Activated CD4-positive, alpha-beta T cell treated with anti-CD3 and anti-CD28 coated beads for 36 hours (primary cell): ENCODE measurements at regions of chr18 and their contacts with region 1.

Region 1: DNA sequence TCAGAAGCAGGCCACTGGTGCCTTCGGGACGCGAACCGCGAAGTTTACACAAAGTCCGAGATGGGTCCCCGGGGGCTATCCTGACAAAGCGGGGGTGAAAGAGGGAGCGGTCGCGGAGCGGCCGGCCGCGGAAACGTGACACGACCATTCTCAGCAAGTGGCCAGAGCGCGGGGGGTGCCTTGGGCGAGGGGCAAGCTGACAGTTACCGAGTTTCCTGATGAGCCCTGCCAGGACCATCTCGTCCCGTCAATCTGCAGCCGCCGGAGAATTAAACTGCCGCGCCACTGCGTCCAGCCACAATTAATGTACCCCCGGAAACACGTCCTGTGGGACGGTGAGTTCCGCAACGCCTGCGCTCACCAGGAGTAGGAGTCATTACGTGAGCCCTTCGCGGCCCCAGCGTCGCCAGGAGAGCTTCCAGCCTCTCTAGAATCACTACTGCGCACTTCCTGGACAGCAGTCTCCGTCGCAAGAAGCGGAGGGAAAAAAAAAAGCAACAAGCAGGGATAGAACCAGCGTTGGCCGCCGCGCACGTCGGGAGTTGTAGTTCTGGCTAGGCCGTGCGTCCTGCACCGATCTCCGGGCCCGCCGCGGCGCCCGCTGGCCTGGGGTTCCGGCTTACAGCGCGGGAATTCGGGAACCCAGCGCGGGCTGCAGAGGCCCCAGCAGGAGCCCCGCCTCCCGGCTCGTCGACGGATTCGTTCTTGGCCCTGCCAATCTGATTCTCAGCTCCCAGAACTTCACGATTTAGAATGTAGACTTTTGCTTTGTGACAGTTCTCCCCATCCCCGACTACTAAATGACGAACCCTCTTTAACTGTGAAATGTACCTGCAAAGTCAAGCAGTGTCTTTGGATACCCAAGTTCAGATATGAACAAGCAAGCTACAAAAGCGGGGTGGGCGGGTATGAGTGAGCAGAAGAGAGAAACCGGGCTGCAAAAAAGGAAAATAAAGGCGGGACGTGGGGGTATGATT is at the start of gene RTTN:
- DNase-seq: peak; percentile 95
- ATAC-seq: peak; percentile 95
- H3K4me3 Mint-ChIP-seq: peak within 1 kb of the TSS; percentile 93
- H3K27ac Mint-ChIP-seq: peak within 1 kb of the TSS; percentile 97
- H3K4me1 Mint-ChIP-seq: peaks cover 25% of the 10 kb centered on the region
- H3K27me3 Mint-ChIP-seq: peaks cover 2% of the 10 kb centered on the region
- total RNA-seq, gene RTTN: 22.2 to 29.7 TPM

Region 2: GRCh38 chr18:68714609-68715496 is 1490.9 kb before region 1 on chr18 and contains the start of gene TMX3:
- CTCF ChIA-PET with region 1: no interaction called
- POLR2A ChIA-PET with region 1: no interaction called
- intact Hi-C with region 1: loop called (anchors 1 kb)
- DNase-seq: peak; percentile 95
- ATAC-seq: peak; percentile 99
- H3K4me3 Mint-ChIP-seq: peak within 1 kb of the TSS; percentile 99
- H3K27ac Mint-ChIP-seq: peak within 1 kb of the TSS; percentile 97
- H3K4me1 Mint-ChIP-seq: peaks cover 34% of the 10 kb centered on the region
- H3K27me3 Mint-ChIP-seq: no peaks in the 10 kb centered on the region
- total RNA-seq, gene TMX3: 46.9 to 49.9 TPM

Region 3: DNA sequence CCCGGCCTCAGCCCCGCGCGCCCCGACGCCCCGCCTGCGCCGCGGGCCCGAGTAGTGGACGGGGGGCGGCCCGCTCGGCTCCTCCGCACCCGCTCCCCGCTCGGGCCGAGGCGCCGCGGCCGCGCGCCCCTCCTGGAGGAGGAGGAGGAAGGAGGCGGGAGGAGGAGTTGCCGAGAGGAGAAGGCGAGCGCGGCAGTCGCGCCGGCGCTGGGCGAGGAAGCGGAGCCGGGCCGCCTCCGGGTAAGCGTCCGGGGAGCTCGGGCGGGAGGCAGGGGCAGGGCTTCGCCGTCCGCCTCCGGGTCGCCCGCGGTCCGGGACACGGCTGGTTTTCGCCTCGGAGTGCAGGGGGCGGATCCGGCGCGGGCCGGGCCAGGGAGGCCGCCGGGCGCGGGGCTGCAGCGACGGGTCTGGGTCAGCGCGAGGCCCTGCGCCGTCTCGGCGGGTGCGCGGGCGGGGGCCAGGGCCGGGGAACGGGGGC is 83.2 kb after region 1 on chr18 and contains the start of gene SOCS6:
- CTCF ChIA-PET with region 1: no interaction called
- POLR2A ChIA-PET with region 1: no interaction called
- intact Hi-C with region 1: loop called (anchors 1 to 5 kb)
- DNase-seq: peak; percentile 71
- ATAC-seq: peak; percentile 63
- H3K4me3 Mint-ChIP-seq: peak within 1 kb of the TSS; percentile 82
- H3K27ac Mint-ChIP-seq: peak within 1 kb of the TSS; percentile 83
- H3K4me1 Mint-ChIP-seq: peaks cover 23% of the 10 kb centered on the region
- H3K27me3 Mint-ChIP-seq: peaks cover 19% of the 10 kb centered on the region
- total RNA-seq, gene SOCS6: 1.7 to 2.1 TPM